Activated naive CD4-positive, alpha-beta T cell treated with anti-CD3 and anti-CD28 coated beads for 36 hours (primary cell): ENCODE measurements at regions of chr9 and their contacts with region 1.

Region 1: DNA sequence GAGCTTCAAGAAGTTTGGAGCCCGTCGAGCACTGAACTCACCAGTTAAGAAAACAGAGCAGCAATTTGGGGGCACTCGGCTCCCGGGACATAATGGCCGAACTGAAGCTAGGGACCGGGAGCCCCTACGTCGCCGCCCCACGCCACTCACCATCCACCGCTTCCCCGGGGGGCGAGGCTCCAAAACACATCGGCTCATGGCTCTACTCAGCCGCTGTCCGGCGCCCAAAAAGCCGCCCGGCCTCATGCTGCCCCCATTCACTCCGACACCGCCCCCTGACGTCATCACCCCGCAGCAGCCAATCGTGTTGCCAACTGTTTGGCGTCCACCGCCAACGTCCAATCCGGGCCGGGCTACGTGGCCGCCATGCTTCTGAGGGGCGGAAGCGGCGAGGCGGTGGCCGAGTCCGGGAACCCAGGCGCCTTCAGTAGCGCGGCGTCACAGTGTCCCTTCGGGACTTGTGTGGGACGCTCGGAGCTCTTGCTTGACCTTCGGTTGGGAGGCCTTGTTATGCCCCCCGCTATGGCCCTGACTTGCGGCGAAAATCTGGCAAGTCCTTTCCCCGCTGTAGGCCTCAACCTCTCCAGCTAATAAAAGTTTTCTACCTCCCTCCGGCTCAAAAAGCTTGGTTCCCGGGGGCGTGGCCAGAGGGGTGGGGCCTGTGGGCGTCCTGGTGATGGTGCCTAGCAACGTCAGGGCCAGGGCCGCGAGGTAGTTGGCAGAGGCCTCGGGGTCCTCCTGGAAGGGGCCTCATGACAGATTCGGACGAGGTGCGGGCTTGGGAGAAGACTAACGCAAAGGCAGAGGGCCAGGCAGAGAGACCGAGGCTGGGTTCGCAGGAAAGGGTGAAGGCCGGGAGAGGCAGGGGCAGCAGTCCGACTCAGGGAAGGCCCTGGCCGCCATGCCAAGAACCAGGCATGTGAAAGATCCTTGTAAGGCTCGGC is at the starts of genes PTRH1 and TTC16:
- DNase-seq: peak; percentile 98
- H3K4me3 Mint-ChIP-seq: peak within 1 kb of the TSS; percentile 97
- H3K27ac Mint-ChIP-seq: peak within 1 kb of the TSS; percentile 84
- H3K4me1 Mint-ChIP-seq: peaks cover 41% of the 10 kb centered on the region
- H3K27me3 Mint-ChIP-seq: no peaks in the 10 kb centered on the region
- total RNA-seq, gene PTRH1: 23.3 to 24.1 TPM
- total RNA-seq, gene TTC16: 0.50 to 0.79 TPM

Region 2: GRCh38 chr9:127611899-127612790 is 103.5 kb before region 1 on chr9 and contains the start of gene STXBP1:
- CTCF ChIA-PET with region 1: no interaction called
- intact Hi-C with region 1: loop called (anchors 5 kb)
- DNase-seq: peak; percentile 86
- H3K4me3 Mint-ChIP-seq: peak within 1 kb of the TSS; percentile 94
- H3K27ac Mint-ChIP-seq: no peak within 1 kb of the TSS
- H3K4me1 Mint-ChIP-seq: peaks cover 21% of the 10 kb centered on the region
- H3K27me3 Mint-ChIP-seq: peaks cover 15% of the 10 kb centered on the region
- total RNA-seq, gene STXBP1: 17.4 to 17.8 TPM

Region 3: GRCh38 chr9:127698985-127699670 is 16.5 kb before region 1 on chr9:
- CTCF ChIA-PET with region 1: no interaction called
- intact Hi-C with region 1: loop called (anchors 1 kb)
- DNase-seq: peak; percentile 92
- H3K4me3 Mint-ChIP-seq: peak overlapping the region; percentile 72
- H3K27ac Mint-ChIP-seq: peak overlapping the region; percentile 25
- H3K4me1 Mint-ChIP-seq: peaks cover 13% of the 10 kb centered on the region
- H3K27me3 Mint-ChIP-seq: no peaks in the 10 kb centered on the region